ENCODE measurements at regions of chr2 and their contacts with region 1.

Region 1: DNA sequence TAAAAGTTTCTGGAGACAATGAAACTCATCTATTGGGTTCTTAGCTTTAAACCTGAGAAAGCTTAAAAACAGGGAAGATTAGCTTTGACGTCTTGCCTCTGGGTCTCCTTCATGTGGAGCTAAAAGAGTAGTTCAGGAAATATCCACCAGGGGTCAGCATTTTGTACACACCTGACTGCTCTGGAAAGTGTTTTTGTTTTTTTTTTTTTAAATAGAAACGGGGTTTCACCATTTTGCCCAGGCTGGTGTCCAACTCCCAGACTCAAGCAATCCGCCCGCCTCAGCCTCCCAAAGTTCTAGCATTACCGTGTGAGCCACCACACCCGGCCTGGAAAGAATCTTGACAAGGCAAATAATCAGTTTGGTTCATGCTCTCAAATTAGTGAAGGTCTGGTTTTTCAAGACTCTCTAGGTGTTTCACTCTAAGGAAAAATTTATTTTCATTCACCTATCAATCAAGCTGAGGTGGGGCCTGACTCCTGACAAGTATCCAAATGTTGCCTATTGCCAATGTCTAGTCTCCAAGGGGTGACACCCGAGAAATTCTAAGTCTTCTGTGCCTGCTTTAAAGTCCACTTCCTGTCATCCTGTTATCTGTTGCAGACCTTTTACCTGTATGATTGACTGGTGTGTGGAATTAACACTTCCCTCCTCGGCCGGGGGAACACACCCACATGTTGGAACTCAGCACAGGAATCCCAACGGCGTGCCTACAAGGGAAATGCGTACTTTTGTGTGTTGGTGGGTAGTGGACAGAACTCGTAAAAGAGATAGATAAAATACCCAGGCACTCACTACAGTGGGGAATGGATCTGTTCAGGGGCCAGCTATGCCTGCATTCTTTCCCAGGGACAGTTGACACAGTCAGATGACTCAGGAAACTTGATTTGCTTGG is 11.3 kb downstream of the IL1RN start:
- DNase-seq: peak; percentile 53 to 66
- H3K4me3 ChIP-seq: peak overlapping the region; percentile 24; the same call in 1 of the 2 replicates
- H3K27ac ChIP-seq: no peak overlapping the region
- H3K4me1 ChIP-seq: peaks cover 10% of the 10 kb centered on the region
- H3K27me3 ChIP-seq: no peaks in the 10 kb centered on the region
- CTCF ChIP-seq: peak; percentile 88

Region 2: DNA sequence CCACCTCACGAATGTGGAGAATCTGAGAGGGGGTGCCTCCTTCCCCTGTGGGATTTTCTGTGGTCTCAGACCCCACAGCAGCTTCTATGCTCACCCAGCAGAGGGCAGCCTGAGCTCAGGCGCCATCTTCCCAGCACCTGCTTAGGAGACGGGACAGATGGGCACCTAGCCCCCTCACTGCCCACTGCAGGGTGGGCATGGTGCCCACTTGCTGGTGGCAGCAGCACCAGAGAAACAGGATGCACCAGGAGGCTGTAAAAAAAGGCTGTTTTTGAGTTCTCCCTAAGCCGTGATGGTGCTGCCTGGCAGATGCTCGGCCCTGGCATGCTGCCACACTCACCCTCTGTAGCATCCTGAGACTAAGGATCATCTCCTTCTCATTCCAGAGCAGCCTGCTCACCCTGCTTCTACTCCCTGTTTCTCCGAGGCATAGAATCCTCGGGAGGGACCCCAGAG is 512.0 kb before region 1 on chr2:
- CTCF ChIA-PET with region 1: no interaction called
- POLR2A ChIA-PET with region 1: interaction called, 11 read pairs
- intact Hi-C with region 1: no loop called
- DNase-seq: peak in 1 of 2 experiments; percentile 65
- H3K4me3 ChIP-seq: peak overlapping the region; percentile 45; the same call in 1 of the 2 replicates
- H3K27ac ChIP-seq: peak overlapping the region; percentile 95
- H3K4me1 ChIP-seq: peaks cover 96% of the 10 kb centered on the region
- H3K27me3 ChIP-seq: no peaks in the 10 kb centered on the region
- CTCF ChIP-seq: peak; percentile 85

Region 3: GRCh38 chr2:113041871-113042508 is 96.7 kb before region 1 on chr2:
- CTCF ChIA-PET with region 1: no interaction called
- POLR2A ChIA-PET with region 1: no interaction called
- intact Hi-C with region 1: no loop called
- DNase-seq: no peak
- H3K4me3 ChIP-seq: no peak overlapping the region
- H3K27ac ChIP-seq: no peak overlapping the region
- H3K4me1 ChIP-seq: no peaks in the 10 kb centered on the region
- H3K27me3 ChIP-seq: no peaks in the 10 kb centered on the region
- CTCF ChIP-seq: peak; percentile 46

Region 4: DNA sequence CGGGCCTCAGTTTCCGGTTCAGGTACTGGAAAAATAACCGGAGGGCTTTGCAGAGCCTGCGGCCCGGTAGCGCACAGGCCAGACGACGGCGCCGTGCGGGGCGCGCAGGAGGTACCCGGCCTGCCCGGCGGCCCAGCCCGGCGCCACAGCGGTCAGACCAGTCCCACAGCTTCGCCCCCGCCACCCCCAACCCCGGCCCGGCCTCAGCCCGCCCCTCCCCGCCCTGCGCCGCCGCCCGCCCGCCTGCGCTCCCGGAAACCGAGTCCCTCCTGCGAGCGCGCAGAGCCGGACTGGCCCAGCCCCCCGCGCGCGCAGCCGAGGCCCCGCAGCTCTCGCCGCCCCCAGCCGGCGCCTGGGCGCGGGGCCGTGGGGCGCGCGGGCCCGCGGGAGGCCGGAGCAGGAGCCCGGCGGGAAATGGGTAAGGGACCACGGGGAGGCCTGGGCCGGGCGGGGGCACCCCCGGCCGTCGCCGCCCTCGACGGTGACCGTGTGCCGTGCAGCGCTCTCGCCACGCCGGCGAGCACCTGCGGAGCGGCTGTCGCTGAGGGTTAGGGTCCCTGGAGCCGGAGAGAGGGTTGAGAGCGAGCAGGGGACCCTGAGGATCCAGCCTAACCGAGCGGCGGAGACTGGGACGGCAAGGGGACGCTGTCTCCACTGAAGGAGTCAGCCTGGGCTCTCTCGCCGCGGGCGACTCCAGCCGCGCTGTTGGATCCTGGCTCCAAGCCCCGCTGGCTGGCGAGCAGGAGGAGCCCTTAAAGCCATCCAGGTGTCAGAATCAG is 18.6 kb after region 1 on chr2:
- CTCF ChIA-PET with region 1: interaction called, 15 read pairs
- POLR2A ChIA-PET with region 1: no interaction called
- intact Hi-C with region 1: no loop called
- DNase-seq: peak; percentile 48 to 82
- H3K4me3 ChIP-seq: peak overlapping the region; percentile 87
- H3K27ac ChIP-seq: peak overlapping the region; percentile 56
- H3K4me1 ChIP-seq: peaks cover 29% of the 10 kb centered on the region
- H3K27me3 ChIP-seq: no peaks in the 10 kb centered on the region
- CTCF ChIP-seq: no peak

Region 5: GRCh38 chr2:113198790-113199612 is 60.3 kb after region 1 on chr2:
- CTCF ChIA-PET with region 1: interaction called, 66 read pairs
- POLR2A ChIA-PET with region 1: interaction called, 4 read pairs
- intact Hi-C with region 1: loop called (anchors 1 kb)
- DNase-seq: peak; percentile 72 to 93
- H3K4me3 ChIP-seq: peak overlapping the region; percentile 67
- H3K27ac ChIP-seq: peak overlapping the region; percentile 78
- H3K4me1 ChIP-seq: peaks cover 6% of the 10 kb centered on the region; the same call in 1 of the 2 replicates
- H3K27me3 ChIP-seq: no peaks in the 10 kb centered on the region
- CTCF ChIP-seq: peak; percentile 83

Region 6: GRCh38 chr2:113248997-113249770 is 110.5 kb after region 1 on chr2:
- CTCF ChIA-PET with region 1: no interaction called
- POLR2A ChIA-PET with region 1: no interaction called
- intact Hi-C with region 1: loop called (anchors 5 kb)
- DNase-seq: peak in 1 of 2 experiments; percentile 73
- H3K4me3 ChIP-seq: no peak overlapping the region
- H3K27ac ChIP-seq: no peak overlapping the region
- H3K4me1 ChIP-seq: 0 out of 2 replicates have a peak, but pooled peaks cover 4% of the 10 kb centered on the region
- H3K27me3 ChIP-seq: no peaks in the 10 kb centered on the region
- CTCF ChIP-seq: peak; percentile 97

Region 7: GRCh38 chr2:113390124-113390849 is 251.6 kb after region 1 on chr2:
- CTCF ChIA-PET with region 1: interaction called, 6 read pairs
- POLR2A ChIA-PET with region 1: no interaction called
- intact Hi-C with region 1: loop called (anchors 5 kb)
- DNase-seq: peak; percentile 59 to 63
- H3K4me3 ChIP-seq: no peak overlapping the region
- H3K27ac ChIP-seq: peak overlapping the region; percentile 56
- H3K4me1 ChIP-seq: peaks cover 5% of the 10 kb centered on the region
- H3K27me3 ChIP-seq: no peaks in the 10 kb centered on the region
- CTCF ChIP-seq: peak; percentile 94